PC-9 (cell line): ENCODE measurements at regions of chr9 and their contacts with region 1.

Region 1: GRCh38 chr9:129482521-129483414 is 138.1 kb downstream of the C9orf50 start:
- DNase-seq: peak; percentile 69 to 92
- H3K4me3 ChIP-seq: peak overlapping the region; percentile 88
- H3K27ac ChIP-seq: peak overlapping the region; percentile 99
- H3K4me1 ChIP-seq: peaks cover 82% of the 10 kb centered on the region
- H3K27me3 ChIP-seq: no peaks in the 10 kb centered on the region
- CTCF ChIP-seq: no peak

Region 2: GRCh38 chr9:129139993-129140396 is 342.8 kb before region 1 on chr9:
- CTCF ChIA-PET with region 1: interaction called, 5 read pairs
- POLR2A ChIA-PET with region 1: interaction called, 5 read pairs
- intact Hi-C with region 1: loop called (anchors 1 kb)
- DNase-seq: peak; percentile 85 to 95
- H3K4me3 ChIP-seq: peak overlapping the region; percentile 91
- H3K27ac ChIP-seq: peak overlapping the region; percentile 100
- H3K4me1 ChIP-seq: peaks cover 43% of the 10 kb centered on the region
- H3K27me3 ChIP-seq: no peaks in the 10 kb centered on the region
- CTCF ChIP-seq: no peak

Region 3: GRCh38 chr9:129333953-129334724 is 148.6 kb before region 1 on chr9:
- CTCF ChIA-PET with region 1: interaction called, 11 read pairs
- POLR2A ChIA-PET with region 1: interaction called, 12 read pairs
- intact Hi-C with region 1: loop called (anchors 1 kb)
- DNase-seq: peak; percentile 98 to 99
- H3K4me3 ChIP-seq: peak overlapping the region; percentile 43; the same call in 1 of the 2 replicates
- H3K27ac ChIP-seq: peak overlapping the region; percentile 94
- H3K4me1 ChIP-seq: peaks cover 45% of the 10 kb centered on the region
- H3K27me3 ChIP-seq: no peaks in the 10 kb centered on the region
- CTCF ChIP-seq: no peak; the same call in 1 of the 2 replicates

Region 4: DNA sequence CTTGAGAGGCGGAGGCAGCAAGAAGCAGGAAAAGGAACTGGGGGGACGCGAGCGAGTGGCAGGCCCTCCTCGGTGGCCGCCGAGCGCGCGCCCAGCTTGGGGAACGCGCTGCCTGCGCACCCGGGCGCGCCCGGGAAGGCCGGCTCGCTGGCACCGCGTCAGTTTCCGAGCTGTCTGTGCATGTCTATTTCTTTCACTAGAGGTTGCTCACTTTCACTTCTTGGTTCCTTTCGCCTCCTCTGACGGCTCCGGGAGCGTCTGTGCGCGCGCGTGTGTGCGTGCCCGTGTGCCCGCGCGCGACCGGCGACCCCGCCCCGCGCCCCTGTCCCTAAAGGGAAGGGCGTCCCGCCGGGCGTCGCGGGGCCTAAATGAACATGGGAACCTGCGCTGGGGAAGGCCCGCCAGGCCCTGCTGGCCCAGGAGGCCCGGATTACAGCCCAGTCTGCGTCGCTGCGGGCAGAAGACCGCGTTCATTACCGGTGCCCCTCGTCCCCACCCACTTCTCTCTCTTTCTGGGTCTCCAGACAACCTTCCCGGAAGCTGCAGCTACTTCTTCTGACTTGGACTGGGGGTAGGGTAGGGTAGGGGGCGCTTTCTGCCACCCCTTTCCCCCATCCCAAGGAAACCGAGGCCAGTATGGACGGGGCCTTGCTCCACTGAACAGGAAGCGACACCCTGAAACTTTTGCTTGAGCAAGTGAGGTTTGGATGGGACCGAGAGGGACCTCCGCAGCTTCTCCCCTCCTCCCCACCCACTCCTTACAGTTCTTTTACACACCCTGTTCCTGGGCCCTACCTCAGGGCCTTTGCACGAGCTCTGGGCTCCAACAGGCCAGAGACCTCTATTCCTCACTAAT is 99.0 kb before region 1 on chr9:
- CTCF ChIA-PET with region 1: interaction called, 9 read pairs
- POLR2A ChIA-PET with region 1: interaction called, 7 read pairs
- intact Hi-C with region 1: loop called (anchors 1 kb)
- DNase-seq: peak; percentile 50 to 68
- H3K4me3 ChIP-seq: peak overlapping the region; percentile 85
- H3K27ac ChIP-seq: peak overlapping the region; percentile 96
- H3K4me1 ChIP-seq: peaks cover 22% of the 10 kb centered on the region
- H3K27me3 ChIP-seq: no peaks in the 10 kb centered on the region
- CTCF ChIP-seq: no peak

Region 5: DNA sequence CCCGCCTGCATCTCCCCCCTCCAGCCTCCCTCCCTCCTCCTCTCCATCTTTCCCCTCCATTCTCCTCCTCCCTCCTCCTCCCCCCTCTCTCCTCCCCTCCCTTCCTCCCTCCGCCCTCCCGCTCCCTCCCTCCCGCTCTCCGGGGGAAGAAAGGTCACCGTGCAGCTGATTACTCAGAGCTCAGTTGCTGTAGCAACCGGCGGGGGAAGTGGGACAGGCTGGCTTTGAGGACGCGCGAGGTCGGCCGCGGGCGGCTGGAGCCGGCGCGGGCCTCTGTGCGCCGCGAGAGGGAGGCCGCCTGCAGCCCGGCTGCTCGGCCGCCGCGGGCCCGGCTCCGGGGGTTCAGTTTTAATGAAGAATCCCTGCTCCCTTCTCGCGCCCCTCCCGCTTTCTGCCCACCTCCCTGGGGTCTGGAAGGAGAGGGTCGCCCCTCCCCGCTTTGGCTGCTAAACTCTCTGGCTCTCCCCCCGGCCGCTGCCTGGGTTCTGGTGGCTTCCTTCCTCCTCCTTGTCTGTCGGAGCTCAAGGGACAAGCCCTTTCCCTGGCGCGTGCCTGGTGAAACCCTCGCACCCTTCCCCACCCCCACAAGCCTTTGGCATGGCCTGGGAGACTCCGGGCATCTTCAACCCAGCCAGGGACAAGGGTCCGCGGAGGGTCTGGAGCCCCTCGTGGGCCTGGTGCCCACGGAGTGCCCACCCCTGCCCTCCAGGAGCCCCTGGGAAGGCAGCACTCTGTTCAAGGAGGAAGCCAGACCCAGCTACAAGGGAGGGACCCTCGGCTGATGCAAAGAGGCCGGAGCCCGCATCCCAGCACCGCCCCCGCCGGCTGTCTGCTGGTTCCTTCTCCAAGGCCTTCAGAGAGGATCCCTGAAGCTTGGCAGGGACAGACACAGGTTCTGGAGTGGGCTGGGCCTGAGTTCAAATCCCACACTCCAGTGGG is 22.2 kb before region 1 on chr9:
- CTCF ChIA-PET with region 1: interaction called, 3 read pairs
- POLR2A ChIA-PET with region 1: interaction called, 27 read pairs
- intact Hi-C with region 1: loop called (anchors 2 kb)
- DNase-seq: peak; percentile 85 to 94
- H3K4me3 ChIP-seq: peak overlapping the region; percentile 64
- H3K27ac ChIP-seq: peak overlapping the region; percentile 89
- H3K4me1 ChIP-seq: peaks cover 47% of the 10 kb centered on the region
- H3K27me3 ChIP-seq: no peaks in the 10 kb centered on the region
- CTCF ChIP-seq: no peak

Region 6: GRCh38 chr9:129569502-129570449 is 87.0 kb after region 1 on chr9:
- CTCF ChIA-PET with region 1: no interaction called
- POLR2A ChIA-PET with region 1: interaction called, 3 read pairs
- intact Hi-C with region 1: loop called (anchors 1 kb)
- DNase-seq: peak; percentile 52 to 56
- H3K4me3 ChIP-seq: peak overlapping the region; percentile 1; the same call in 1 of the 2 replicates
- H3K27ac ChIP-seq: peak overlapping the region; percentile 90
- H3K4me1 ChIP-seq: peaks cover 36% of the 10 kb centered on the region
- H3K27me3 ChIP-seq: no peaks in the 10 kb centered on the region
- CTCF ChIP-seq: peak; percentile 67

Region 7: GRCh38 chr9:129626079-129626624 is 143.4 kb after region 1 on chr9 and contains the start of gene NTMT1:
- CTCF ChIA-PET with region 1: no interaction called
- POLR2A ChIA-PET with region 1: no interaction called
- intact Hi-C with region 1: no loop called
- DNase-seq: peak; percentile 53 to 85
- H3K4me3 ChIP-seq: peak within 1 kb of the TSS; percentile 99
- H3K27ac ChIP-seq: peak within 1 kb of the TSS; percentile 33; the same call in 1 of the 2 replicates
- H3K4me1 ChIP-seq: peaks cover 32% of the 10 kb centered on the region
- H3K27me3 ChIP-seq: no peaks in the 10 kb centered on the region
- CTCF ChIP-seq: no peak
- total RNA-seq, gene NTMT1: 52.5 and 53.1 TPM in 2 replicates

Region 8: DNA sequence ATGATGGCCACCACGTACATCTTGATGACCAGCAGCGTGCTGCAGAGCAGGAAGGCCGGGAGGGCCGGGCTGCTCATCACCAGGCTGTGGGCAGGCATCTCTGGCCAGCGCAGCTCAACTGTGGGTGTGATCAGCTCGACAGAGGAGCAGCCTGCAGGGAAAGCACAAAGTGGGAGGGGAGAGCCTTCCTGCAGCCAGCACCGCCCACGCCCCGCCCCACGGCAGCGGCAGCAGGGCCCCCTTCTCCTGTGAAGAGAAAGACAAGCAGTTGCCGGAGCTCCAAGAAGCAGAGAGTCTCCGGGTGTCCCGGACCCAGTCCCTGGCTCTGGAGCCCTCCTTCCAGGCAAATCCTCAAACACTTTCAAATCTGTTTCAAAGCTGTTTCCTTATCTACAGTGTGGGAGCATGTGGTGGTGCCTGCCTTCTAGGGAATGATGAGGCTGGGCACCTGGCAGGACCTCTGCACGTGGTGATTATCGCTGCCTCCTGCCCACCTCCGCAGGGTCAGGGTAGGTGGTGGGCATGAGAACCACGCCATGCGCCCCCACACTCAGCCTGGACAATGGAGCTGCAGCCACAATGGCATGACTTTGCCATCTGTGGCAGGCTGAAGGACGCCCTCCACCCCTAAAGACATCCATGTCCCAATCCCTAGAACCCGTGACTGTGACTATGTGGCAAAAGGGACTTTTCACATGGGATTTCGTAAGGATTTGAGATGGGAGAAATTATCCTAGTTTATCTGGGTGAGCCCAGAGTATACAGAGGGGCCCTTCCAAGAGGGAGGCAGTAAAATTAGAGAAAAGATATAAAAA is 270.4 kb after region 1 on chr9 and contains the start of gene PTGES:
- CTCF ChIA-PET with region 1: no interaction called
- POLR2A ChIA-PET with region 1: no interaction called
- intact Hi-C with region 1: loop called (anchors 10 kb)
- DNase-seq: peak; percentile 84 to 94
- H3K4me3 ChIP-seq: peak within 1 kb of the TSS; percentile 85
- H3K27ac ChIP-seq: peak within 1 kb of the TSS; percentile 94
- H3K4me1 ChIP-seq: peaks cover 61% of the 10 kb centered on the region
- H3K27me3 ChIP-seq: no peaks in the 10 kb centered on the region
- CTCF ChIP-seq: no peak
- total RNA-seq, gene PTGES: 116 and 119 TPM in 2 replicates